ENCODE measurements at regions of chr15 and their contacts with region 1.

Region 1: GRCh38 chr15:91271565-91272153 is 171.6 kb downstream of the SV2B start:
- DNase-seq: peak in 1 of 2 experiments; percentile 34
- H3K4me3 ChIP-seq: no peak overlapping the region
- H3K27ac ChIP-seq: no peak overlapping the region
- H3K4me1 ChIP-seq: no peaks in the 10 kb centered on the region
- H3K27me3 ChIP-seq: peaks cover 15% of the 10 kb centered on the region; the same call in 1 of the 2 replicates
- CTCF ChIP-seq: peak; percentile 87

Region 2: DNA sequence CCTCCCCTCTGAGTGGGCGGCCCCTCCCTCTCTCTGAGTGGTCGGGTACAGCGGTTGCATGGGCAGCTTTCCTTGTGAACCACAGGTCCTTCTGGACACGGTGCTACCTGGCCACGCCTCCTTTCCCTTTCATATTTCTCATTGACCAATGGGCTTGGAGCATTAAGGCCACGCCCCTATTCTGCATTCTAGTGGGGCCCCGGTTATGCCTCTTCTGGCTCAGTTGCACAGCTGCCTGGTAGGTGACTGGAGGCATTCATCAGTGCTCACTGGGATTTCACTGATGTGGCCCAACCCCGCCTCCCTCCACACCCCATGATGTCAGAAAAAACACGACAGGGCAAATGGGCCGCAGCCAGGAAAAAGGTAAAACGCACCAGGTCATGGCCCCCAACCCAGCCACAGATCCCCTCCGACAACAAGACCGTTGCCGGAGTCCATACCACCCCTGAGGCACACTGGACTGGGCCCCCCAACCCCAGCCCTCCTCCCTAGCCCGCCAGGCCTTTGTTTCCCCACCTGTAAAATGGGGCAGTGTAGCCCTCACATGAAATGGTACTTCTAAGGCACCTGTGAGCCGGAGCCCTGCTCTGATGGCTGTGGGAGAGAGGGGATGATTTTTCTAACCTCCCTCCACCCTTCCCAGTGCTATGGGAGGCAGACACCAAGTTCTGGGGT is 979.8 kb before region 1 on chr15:
- CTCF ChIA-PET with region 1: no interaction called
- POLR2A ChIA-PET with region 1: no interaction called
- intact Hi-C with region 1: loop called (anchors 1 kb)
- DNase-seq: peak; percentile 15 to 47
- H3K4me3 ChIP-seq: no peak overlapping the region
- H3K27ac ChIP-seq: no peak overlapping the region
- H3K4me1 ChIP-seq: peaks cover 4% of the 10 kb centered on the region; the same call in 1 of the 2 replicates
- H3K27me3 ChIP-seq: no peaks in the 10 kb centered on the region
- CTCF ChIP-seq: no peak